ENCODE measurements at regions of chr10 and their contacts with region 1.

Region 1: DNA sequence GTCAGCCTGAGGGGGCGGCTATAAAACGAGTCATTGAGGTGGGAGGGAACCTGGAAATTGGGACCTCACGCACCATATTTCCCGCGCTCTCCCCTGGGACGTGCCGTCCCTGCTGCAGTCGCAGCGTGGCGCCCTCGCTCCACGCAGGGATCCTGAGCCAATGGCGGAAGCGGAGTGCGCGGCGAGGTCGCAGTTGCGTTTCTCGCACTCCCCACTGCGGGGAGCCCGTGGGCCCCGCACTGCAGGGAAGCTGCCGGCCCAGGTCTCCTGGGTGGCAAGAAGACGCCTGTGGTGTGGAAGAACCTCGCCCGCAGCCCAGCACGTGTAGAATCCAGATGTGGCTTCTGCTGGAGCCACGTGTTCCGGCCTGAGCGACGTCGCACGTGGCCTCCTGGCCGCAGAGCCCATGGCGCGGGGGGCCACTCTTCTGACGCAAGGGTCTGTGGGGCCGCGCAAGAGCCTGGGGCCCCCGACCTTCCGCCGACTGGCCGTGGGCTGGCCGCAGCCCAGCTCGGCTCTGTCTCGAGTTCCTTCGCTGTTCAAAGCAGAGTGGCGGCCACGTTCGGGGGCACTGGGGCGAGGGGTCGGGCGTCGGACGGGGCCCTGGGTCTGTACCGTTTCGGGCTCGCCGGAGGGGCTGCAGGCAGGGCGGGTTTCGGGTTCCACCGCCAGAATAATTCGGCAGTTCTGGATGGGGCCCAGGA is 26.4 kb downstream of the HIF1AN start:
- DNase-seq: peak; percentile 72 to 91
- ATAC-seq: peak; percentile 94 to 99 (median 98)
- H3K4me3 ChIP-seq: no peak overlapping the region
- H3K4me3 Mint-ChIP-seq: peak overlapping the region; percentile 60
- H3K27ac ChIP-seq: no peak overlapping the region
- H3K27ac Mint-ChIP-seq: peak overlapping the region in 1 of 2 donors; percentile 19
- H3K4me1 ChIP-seq: peaks cover 15% of the 10 kb centered on the region
- H3K4me1 Mint-ChIP-seq: peaks cover 10 to 26% of the 10 kb centered on the region in 2 donors
- H3K27me3 ChIP-seq: peaks cover 12% of the 10 kb centered on the region
- H3K27me3 Mint-ChIP-seq: peaks cover 30 to 37% of the 10 kb centered on the region in 2 donors
- CTCF ChIP-seq: peak; percentile 97

Region 2: GRCh38 chr10:100637785-100638184 is 75.6 kb after region 1 on chr10:
- intact Hi-C with region 1: no loop called
- DNase-seq: no peak
- ATAC-seq: no peak
- H3K4me3 ChIP-seq: no peak overlapping the region
- H3K4me3 Mint-ChIP-seq: no peak overlapping the region
- H3K27ac ChIP-seq: no peak overlapping the region
- H3K27ac Mint-ChIP-seq: no peak overlapping the region
- H3K4me1 ChIP-seq: no peaks in the 10 kb centered on the region
- H3K4me1 Mint-ChIP-seq: no peaks in the 10 kb centered on the region
- H3K27me3 ChIP-seq: no peaks in the 10 kb centered on the region
- H3K27me3 Mint-ChIP-seq: peaks cover 35 to 50% of the 10 kb centered on the region in 2 donors
- CTCF ChIP-seq: no peak

Region 3: GRCh38 chr10:100743626-100744135 is 181.5 kb after region 1 on chr10:
- intact Hi-C with region 1: loop called (anchors 1 kb)
- DNase-seq: peak in 1 of 2 donors; percentile 83
- ATAC-seq: peak; percentile 46 to 78 (median 55)
- H3K4me3 ChIP-seq: no peak overlapping the region
- H3K4me3 Mint-ChIP-seq: no peak overlapping the region
- H3K27ac ChIP-seq: no peak overlapping the region
- H3K27ac Mint-ChIP-seq: no peak overlapping the region
- H3K4me1 ChIP-seq: peaks cover 10% of the 10 kb centered on the region
- H3K4me1 Mint-ChIP-seq: peaks cover 12 to 25% of the 10 kb centered on the region in 2 donors
- H3K27me3 ChIP-seq: peaks cover 64% of the 10 kb centered on the region
- H3K27me3 Mint-ChIP-seq: peaks cover 56 to 62% of the 10 kb centered on the region in 2 donors
- CTCF ChIP-seq: no peak

Region 4: DNA sequence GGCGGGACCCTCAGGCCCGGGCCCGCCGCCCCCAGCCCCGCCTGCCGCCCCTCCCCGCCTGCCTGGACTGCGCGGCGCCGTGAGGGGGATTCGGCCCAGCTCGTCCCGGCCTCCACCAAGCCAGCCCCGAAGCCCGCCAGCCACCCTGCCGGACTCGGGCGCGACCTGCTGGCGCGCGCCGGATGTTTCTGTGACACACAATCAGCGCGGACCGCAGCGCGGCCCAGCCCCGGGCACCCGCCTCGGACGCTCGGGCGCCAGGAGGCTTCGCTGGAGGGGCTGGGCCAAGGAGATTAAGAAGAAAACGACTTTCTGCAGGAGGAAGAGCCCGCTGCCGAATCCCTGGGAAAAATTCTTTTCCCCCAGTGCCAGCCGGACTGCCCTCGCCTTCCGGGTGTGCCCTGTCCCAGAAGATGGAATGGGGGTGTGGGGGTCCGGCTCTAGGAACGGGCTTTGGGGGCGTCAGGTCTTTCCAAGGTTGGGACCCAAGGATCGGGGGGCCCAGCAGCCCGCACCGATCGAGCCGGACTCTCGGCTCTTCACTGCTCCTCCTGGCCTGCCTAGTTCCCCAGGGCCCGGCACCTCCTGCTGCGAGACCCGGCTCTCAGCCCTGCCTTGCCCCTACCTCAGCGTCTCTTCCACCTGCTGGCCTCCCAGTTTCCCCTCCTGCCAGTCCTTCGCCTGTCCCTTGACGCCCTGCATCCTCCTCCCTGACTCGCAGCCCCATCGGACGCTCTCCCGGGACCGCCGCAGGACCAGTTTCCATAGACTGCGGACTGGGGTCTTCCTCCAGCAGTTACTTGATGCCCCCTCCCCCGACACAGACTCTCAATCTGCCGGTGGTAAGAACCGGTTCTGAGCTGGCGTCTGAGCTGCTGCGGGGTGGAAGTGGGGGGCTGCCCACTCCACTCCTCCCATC is 265.9 kb after region 1 on chr10:
- intact Hi-C with region 1: loop called (anchors 5 kb)
- DNase-seq: peak; percentile 43 to 50
- ATAC-seq: peak; percentile 54 to 70 (median 68)
- H3K4me3 ChIP-seq: peak overlapping the region; percentile 26
- H3K4me3 Mint-ChIP-seq: peak overlapping the region; percentile 79
- H3K27ac ChIP-seq: no peak overlapping the region
- H3K27ac Mint-ChIP-seq: peak overlapping the region in 1 of 2 donors; percentile 79
- H3K4me1 ChIP-seq: peaks cover 40% of the 10 kb centered on the region
- H3K4me1 Mint-ChIP-seq: peaks cover 25 to 48% of the 10 kb centered on the region in 2 donors
- H3K27me3 ChIP-seq: peaks cover 53% of the 10 kb centered on the region
- H3K27me3 Mint-ChIP-seq: peaks cover 66 to 68% of the 10 kb centered on the region in 2 donors
- CTCF ChIP-seq: no peak

Region 5: DNA sequence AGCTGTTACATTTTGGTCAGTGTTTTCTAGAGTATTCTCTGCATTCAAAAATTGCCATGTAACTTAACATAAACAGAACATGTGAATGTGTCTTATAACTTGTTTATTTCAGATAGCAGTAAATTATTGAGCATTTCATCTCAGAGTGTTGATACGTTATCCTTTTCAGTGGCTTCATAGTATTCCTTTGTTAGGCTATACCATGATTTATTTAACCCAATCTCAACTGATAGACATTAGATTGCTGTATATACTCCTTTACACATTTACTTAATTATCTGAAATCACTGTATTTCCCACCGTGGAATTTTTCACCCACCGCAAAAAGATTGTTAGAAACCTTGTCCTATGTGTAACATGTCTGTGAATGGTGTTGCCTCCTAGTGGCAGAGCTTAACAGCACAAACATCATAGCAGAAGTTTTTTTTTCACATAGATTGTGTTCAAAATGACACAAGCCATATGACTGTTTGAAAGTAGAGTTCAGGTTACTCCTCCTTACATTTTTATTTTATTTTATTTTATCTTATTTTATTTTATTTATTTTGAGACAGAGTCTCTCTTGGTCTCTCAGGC is 372.0 kb after region 1 on chr10:
- intact Hi-C with region 1: loop called (anchors 10 kb)
- DNase-seq: peak in 1 of 2 donors; percentile 41
- ATAC-seq: no peak
- H3K4me3 ChIP-seq: no peak overlapping the region
- H3K4me3 Mint-ChIP-seq: no peak overlapping the region
- H3K27ac ChIP-seq: no peak overlapping the region
- H3K27ac Mint-ChIP-seq: no peak overlapping the region
- H3K4me1 ChIP-seq: no peaks in the 10 kb centered on the region
- H3K4me1 Mint-ChIP-seq: peaks cover 0 to 10% of the 10 kb centered on the region in 2 donors
- H3K27me3 ChIP-seq: no peaks in the 10 kb centered on the region
- H3K27me3 Mint-ChIP-seq: no peaks in the 10 kb centered on the region
- CTCF ChIP-seq: peak; percentile 39

Measured in natural killer cell (primary cell).